ENCODE measurements at regions of chr2 and their contacts with region 1.

Region 1: GRCh38 chr2:236569573-236569973 is at the start of gene ACKR3:
- DNase-seq: peak; percentile 76
- H3K4me3 Mint-ChIP-seq: peak within 1 kb of the TSS; percentile 32
- H3K27ac Mint-ChIP-seq: no peak within 1 kb of the TSS
- H3K4me1 Mint-ChIP-seq: peaks cover 18% of the 10 kb centered on the region
- H3K27me3 Mint-ChIP-seq: no peaks in the 10 kb centered on the region
- total RNA-seq, gene ACKR3: 1.2 TPM

Region 2: DNA sequence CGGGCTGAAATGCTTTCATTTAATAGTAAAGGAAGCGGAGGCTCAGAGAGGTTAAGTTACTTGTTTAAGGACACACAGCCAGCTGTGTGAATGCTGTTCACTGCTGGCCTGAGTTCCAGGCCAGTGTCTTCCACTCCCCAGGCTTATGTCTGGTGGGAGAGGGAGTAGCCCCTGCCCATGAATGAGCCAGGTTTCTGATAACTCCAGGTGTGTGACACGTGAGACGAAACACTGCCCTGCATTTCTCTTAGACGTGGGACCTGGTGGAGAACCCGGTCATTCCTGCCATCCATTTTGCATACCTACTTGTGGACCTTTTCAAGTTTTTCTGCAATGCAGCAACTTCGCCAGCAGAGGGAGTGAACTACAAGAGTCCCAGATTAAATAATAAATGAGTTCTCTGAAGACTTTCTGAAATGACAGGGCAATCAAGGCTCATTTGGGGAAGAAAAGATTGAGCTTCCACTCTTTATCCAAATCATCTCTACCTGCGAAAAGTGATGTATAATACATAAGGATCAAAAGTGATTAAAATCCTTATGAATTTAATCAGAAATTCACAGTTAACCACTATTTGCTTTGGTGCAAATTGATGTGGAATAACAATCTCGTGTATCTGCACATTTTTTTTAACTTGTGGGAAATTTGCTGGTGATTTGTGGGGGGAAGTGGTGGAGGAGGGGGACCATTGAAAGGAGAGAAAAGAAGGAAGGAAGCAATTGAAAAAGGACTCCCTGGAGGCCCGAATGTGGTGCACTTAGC is 226.0 kb before region 1 on chr2:
- CTCF ChIA-PET with region 1: interaction called, 11 read pairs
- POLR2A ChIA-PET with region 1: no interaction called
- intact Hi-C with region 1: no loop called
- DNase-seq: peak; percentile 54
- H3K4me3 Mint-ChIP-seq: no peak overlapping the region
- H3K27ac Mint-ChIP-seq: no peak overlapping the region
- H3K4me1 Mint-ChIP-seq: no peaks in the 10 kb centered on the region
- H3K27me3 Mint-ChIP-seq: peaks cover 3% of the 10 kb centered on the region

Region 3: DNA sequence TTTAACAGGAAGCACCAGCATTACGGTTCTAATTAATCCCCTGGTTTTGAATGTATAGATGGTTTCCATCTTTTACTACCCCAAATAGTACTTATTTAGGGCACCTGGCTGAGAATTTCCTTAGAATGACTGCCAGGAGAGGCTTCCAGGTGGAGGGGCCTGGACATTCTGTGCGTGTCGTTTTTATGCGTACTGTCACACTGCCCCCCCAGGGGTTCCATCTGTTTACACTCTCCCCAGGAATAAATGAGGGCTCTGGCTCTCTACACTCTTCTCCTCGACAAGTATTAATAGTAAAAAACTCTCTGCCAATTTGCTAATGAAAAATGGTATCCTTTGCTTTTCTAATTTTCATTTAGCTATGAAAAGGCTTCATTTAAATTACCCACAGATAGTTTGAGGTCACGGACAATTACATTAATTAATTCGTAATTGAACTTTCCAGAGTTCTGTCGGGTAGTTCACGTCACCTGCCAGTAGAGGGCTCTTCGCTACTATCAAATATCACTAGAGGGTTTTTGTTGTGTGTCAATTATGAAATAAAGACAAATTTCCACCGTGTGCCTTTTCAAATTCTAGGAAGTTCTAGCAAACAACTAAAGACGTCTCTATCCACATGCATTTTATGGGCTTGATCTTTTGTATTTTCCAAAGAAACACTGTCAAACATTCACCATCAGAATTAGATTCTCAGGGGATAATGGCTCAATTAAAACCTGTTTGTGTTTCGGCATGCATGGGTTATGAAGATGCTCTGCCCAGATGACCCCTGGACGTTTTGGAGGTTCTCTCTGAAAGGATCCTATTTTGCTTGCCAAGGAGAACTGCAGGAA is 216.6 kb before region 1 on chr2:
- CTCF ChIA-PET with region 1: interaction called, 6 read pairs
- POLR2A ChIA-PET with region 1: no interaction called
- intact Hi-C with region 1: loop called (anchors 1 kb)
- DNase-seq: peak; percentile 33
- H3K4me3 Mint-ChIP-seq: no peak overlapping the region
- H3K27ac Mint-ChIP-seq: no peak overlapping the region
- H3K4me1 Mint-ChIP-seq: peaks cover 2% of the 10 kb centered on the region
- H3K27me3 Mint-ChIP-seq: no peaks in the 10 kb centered on the region

Region 4: GRCh38 chr2:236545814-236546480 is 23.6 kb before region 1 on chr2:
- CTCF ChIA-PET with region 1: interaction called, 6 read pairs
- POLR2A ChIA-PET with region 1: no interaction called
- intact Hi-C with region 1: loop called (anchors 2 kb)
- DNase-seq: peak; percentile 44
- H3K4me3 Mint-ChIP-seq: peak overlapping the region; percentile 65
- H3K27ac Mint-ChIP-seq: peak overlapping the region; percentile 81
- H3K4me1 Mint-ChIP-seq: peaks cover 81% of the 10 kb centered on the region
- H3K27me3 Mint-ChIP-seq: no peaks in the 10 kb centered on the region

Region 5: DNA sequence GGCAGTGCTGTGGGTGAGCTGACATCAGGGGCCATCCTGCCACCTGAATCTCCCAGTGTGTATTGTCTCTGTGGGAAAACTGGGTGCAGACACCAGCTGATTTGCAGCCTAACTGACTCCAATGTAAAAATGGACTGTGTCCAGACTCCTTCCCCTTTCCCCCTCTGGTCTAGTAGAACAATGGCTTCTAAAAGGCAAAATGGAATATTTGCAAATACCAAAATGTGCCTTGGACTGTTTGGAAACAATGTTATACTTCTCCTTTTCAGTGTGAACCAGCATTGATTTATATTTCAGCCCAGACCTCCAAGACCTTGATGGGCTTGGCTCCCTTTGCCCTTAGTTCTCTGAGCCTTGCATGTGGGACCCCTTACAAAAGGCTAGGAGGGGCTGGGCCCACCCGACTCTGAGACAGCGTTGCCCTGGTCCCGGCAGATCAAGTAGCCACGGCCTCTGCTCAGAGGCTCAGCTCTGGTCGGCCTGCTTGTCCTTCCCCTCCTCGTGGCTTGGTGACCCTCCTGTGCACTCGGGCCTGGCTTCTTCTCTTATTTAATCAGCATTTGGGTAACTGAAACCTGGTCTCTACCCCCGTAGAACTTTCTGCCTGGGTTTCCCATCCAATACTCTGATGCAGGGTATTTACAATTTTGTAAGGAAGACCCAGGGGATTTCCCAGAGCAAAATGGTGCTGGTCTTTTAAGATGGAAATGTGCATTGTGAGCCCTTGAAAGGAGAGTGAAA is 17.9 kb before region 1 on chr2:
- CTCF ChIA-PET with region 1: interaction called, 17 read pairs
- POLR2A ChIA-PET with region 1: no interaction called
- intact Hi-C with region 1: loop called (anchors 2 kb)
- DNase-seq: no peak
- H3K4me3 Mint-ChIP-seq: peak overlapping the region; percentile 13
- H3K27ac Mint-ChIP-seq: peak overlapping the region; percentile 68
- H3K4me1 Mint-ChIP-seq: peaks cover 93% of the 10 kb centered on the region
- H3K27me3 Mint-ChIP-seq: no peaks in the 10 kb centered on the region

Region 6: DNA sequence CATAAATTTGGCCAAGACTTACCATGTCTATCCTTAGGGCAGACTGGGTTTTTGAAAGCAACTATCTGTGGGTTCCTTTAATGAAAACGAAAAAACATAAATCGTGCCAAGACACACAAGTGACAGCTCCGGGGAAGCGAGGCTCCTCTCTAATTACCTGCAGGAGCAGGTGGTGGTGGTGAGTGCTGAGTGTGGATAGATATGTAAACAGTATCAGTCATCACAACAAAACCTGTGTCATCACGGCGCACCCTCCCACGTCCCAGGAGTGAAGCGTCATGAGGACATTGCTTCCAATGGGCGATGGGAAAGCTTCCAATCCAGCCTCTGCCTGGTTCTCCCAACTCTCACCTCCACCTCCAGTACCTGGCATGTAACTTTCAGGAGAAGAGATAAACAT is 31.3 kb after region 1 on chr2:
- CTCF ChIA-PET with region 1: no interaction called
- POLR2A ChIA-PET with region 1: no interaction called
- intact Hi-C with region 1: no loop called
- DNase-seq: no peak
- H3K4me3 Mint-ChIP-seq: no peak overlapping the region
- H3K27ac Mint-ChIP-seq: no peak overlapping the region
- H3K4me1 Mint-ChIP-seq: no peaks in the 10 kb centered on the region
- H3K27me3 Mint-ChIP-seq: peaks cover 15% of the 10 kb centered on the region

Region 7: DNA sequence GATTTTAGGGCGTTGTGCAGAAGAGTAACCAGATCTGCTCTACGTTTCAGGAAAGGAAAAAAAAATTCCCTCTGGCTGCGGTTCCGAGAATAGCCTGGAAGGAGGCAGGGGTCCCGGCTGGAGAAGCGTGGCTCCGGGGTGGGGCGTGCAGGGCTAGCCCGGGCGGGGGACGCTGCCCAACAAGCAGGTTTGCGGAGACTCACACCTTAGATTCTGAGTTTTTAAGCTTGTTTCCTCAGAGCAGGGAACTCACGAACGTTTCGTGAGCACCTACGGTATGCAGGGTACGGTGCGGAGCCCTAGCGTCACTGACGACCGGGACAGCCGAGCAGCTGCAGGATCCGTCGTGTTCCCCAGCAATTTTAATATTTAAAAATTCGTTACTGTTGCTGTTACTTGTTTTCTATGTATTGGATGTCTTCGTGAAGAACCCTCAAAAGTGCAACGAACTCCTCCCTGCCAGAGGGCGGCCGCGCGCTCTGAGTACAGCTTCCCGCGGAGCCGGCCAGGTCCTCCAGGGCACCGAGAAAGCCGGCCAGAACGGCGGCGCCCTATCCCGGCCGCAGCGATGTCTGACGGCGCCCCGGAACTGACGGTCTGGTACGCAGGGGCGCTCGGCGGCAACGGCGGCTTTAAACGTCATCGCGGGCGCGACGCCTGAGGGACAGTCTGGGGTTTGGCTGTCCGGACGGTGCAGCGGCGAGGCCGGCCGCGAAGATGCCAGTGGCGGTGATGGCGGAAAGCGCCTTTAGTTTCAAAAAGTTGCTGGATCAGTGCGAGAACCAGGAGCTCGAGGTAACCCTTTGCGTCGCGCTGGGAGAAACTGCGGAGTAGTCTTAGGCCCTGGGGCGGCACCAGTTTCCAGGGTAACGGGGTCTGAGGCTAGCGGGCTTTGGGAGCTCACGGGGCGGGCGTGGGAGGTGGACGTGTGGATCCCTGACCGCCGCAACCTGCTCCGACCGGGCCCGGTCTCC is 516.0 kb after region 1 on chr2 and contains the start of gene COPS8:
- CTCF ChIA-PET with region 1: interaction called, 4 read pairs
- POLR2A ChIA-PET with region 1: no interaction called
- intact Hi-C with region 1: loop called (anchors 5 kb)
- DNase-seq: peak; percentile 94
- H3K4me3 Mint-ChIP-seq: peak within 1 kb of the TSS; percentile 98
- H3K27ac Mint-ChIP-seq: peak within 1 kb of the TSS; percentile 92
- H3K4me1 Mint-ChIP-seq: peaks cover 13% of the 10 kb centered on the region
- H3K27me3 Mint-ChIP-seq: no peaks in the 10 kb centered on the region
- total RNA-seq, gene COPS8: 61.1 to 66.8 TPM

Measured in activated CD4-positive, alpha-beta memory T cell treated with anti-CD3 and anti-CD28 coated beads for 36 hours (primary cell).